GM13977 (cell line): ENCODE measurements at regions of chr19 and their contacts with region 1.

Region 1: GRCh38 chr19:15479391-15480345 is at the start of gene PGLYRP2:
- DNase-seq: no peak
- CTCF ChIP-seq: peak; percentile 12

Region 2: DNA sequence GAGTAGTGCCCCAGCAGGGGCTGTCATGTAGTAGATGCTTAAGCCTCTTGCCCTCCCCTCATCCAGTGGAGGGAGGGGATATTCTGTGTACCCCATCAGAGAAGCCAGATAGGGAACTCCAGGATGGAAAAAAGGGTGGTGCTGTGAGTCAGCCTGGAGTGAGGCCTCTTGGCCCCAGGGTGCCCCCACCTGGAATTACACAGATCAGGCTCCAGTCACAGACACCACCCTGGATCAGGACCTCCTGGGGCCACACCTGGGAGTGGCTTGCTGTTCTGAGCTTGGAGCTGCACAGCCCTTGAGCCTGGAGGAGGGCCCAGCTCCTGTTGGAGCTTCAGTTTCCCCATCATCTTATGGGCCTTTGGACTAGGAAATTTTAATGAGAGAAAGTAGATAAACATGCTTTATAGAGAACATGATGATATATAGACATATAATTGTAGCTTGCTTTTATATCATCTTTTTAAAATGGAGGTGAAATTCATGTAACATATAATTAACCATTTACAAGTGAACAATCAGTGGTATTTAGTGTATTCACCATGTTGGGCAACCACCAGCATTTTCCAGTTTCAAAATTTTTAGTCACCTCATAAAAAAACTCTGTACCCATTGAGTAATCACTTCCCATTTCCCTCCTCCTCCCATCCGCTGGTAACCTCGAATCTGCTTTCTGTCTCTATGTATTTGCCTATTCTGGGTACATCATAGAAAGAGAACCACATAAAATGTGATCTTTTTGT is 53.3 kb after region 1 on chr19:
- in situ Hi-C with region 1: loop called (anchors 10 kb)
- DNase-seq: no peak
- CTCF ChIP-seq: no peak

Region 3: DNA sequence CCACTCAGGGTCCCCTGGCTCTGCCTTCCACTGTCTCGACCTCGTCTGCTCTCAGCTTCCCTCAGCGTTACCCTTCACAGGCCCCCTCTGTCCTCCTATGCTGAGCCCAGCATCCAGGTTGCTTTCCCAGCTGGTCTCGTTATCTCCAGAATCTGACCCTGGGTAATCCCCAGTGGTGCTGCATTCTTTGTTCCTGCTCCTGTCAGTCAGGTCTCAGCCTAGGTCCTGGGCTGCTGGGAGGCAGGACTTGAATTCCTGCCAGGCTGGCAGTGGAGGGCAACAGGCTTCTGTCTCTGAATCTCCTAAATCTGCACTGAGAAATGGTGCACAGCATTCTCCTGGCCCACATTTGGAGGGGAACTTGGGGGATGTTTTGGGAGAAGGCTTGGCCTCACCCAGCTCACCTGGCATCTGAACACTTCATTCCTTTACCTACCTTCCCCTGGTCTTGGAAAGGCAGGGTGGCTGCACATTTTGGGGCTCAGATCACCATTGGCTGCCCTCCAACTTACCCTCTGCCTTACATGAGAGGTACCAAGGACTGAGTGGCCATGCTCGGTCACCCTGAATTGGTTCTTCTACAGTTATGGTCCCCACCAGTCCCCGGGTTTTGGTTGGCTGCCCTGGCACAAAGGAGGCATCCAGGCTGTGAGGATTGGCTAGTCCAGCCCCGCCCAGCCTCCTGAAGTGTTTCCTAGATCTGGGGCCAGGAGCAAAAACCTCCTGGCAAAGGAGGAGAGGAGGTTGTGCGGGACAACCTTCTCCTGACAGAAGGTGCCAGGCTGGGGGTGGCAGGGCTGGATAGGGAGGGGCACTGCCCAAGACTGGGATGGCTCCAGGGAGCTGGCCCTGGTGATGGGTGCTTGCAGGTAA is 135.1 kb after region 1 on chr19 and contains the start of gene CYP4F8:
- in situ Hi-C with region 1: no loop called
- DNase-seq: no peak
- CTCF ChIP-seq: no peak